HAP-1 (cell line): ENCODE measurements at regions of chr11 and their contacts with region 1.

Region 1: GRCh38 chr11:9314291-9315036 is at the start of gene TMEM41B:
- DNase-seq: peak; percentile 99 to 100
- H3K4me3 ChIP-seq: peak within 1 kb of the TSS; percentile 94
- H3K4me1 ChIP-seq: peaks cover 35% of the 10 kb centered on the region
- H3K27me3 ChIP-seq: no peaks in the 10 kb centered on the region

Region 2: DNA sequence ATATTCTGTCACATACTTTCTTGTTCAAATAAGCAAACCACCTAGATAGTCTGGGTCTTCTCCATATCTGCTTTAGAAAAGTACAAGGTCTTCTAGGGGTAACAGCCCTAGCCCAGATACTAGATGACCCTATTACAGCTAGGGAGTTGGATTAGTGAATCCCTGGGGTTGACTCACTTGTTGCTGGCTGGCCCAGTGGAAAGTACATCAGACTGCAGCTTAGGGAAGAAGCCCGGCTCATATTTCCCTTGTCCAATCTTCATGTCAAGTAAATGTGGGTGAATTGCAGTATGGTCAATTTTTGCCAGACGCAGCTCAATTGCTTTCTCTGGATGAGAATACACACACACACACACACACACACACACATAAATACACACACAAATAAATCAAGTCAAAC is 144.0 kb before region 1 on chr11:
- in situ Hi-C with region 1: no loop called
- DNase-seq: no peak
- H3K4me3 ChIP-seq: no peak overlapping the region
- H3K4me1 ChIP-seq: no peaks in the 10 kb centered on the region
- H3K27me3 ChIP-seq: no peaks in the 10 kb centered on the region

Region 3: GRCh38 chr11:9384535-9385303 is 70.3 kb after region 1 on chr11 and contains the start of gene IPO7:
- in situ Hi-C with region 1: loop called (anchors 5 kb)
- DNase-seq: peak; percentile 90 to 94
- H3K4me3 ChIP-seq: peak within 1 kb of the TSS; percentile 90
- H3K4me1 ChIP-seq: peaks cover 16% of the 10 kb centered on the region
- H3K27me3 ChIP-seq: no peaks in the 10 kb centered on the region